CD4-positive, alpha-beta T cell (primary cell): ENCODE measurements at regions of chr22 and their contacts with region 1.

Region 1: DNA sequence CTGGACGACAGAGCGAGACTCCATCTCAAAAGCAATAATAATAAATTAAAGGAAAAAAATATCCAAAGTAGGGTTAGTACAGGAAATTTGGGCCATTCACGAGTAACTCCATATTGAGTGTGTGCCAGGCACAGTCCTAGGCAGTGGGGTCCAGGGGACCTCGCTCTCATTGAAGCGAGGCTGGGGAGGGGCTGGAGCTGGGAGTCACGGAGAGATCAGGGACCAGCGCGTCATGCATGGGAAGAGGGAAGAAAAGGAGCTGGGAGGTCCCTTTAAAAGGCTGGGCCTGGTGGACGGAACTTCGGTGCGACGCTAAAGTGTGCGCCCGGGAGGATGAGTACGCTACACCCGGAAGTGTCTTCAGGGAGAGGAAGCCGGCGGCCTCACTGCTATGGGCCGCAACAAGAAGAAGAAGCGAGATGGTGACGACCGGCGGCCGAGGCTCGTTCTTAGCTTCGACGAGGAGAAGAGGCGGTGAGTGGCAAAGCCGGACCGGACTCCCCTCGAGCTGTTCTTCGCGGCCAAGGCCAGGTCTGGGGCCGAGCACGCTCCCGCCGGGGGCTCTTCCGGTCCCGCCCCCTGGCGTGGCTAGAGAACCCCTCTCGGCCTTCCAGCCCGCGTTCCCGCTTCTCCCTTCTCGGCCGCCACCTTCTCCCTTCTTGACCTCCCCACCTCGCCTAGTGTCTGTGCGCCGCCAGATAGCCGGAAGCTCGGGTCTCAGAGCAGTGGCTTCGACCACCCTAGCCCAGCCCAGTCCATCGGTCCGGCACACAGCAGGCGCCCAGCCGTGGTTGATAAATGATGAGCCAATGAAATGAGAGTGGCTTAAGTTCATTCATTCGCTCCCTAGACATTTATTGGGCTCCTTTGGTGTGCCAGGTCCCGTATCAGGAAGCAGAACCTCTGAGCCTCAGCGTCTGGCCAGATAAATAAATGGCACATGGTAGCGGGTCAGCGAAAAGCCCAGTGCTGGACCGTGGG is at the start of gene NOL12:
- DNase-seq: peak; percentile 64 to 90 (median 72)
- ATAC-seq: peak; percentile 92
- H3K4me3 ChIP-seq: peak within 1 kb of the TSS; percentile 72
- H3K4me3 Mint-ChIP-seq: peak within 1 kb of the TSS; percentile 90
- H3K27ac ChIP-seq: peak within 1 kb of the TSS; percentile 75 to 80
- H3K27ac Mint-ChIP-seq: peak within 1 kb of the TSS; percentile 76
- H3K4me1 ChIP-seq: peaks cover 38% of the 10 kb centered on the region
- H3K4me1 Mint-ChIP-seq: peaks cover 27% of the 10 kb centered on the region
- H3K27me3 ChIP-seq: no peaks in the 10 kb centered on the region
- H3K27me3 Mint-ChIP-seq: no peaks in the 10 kb centered on the region
- CTCF ChIP-seq: no peak
- total RNA-seq, gene NOL12: 24.3 to 26.2 TPM

Region 2: GRCh38 chr22:37331034-37331428 is 355.3 kb before region 1 on chr22:
- CTCF ChIA-PET with region 1: no interaction called
- POLR2A ChIA-PET with region 1: no interaction called
- intact Hi-C with region 1: no loop called
- DNase-seq: no peak
- ATAC-seq: no peak
- H3K4me3 ChIP-seq: no peak overlapping the region
- H3K4me3 Mint-ChIP-seq: no peak overlapping the region
- H3K27ac ChIP-seq: no peak overlapping the region
- H3K27ac Mint-ChIP-seq: no peak overlapping the region
- H3K4me1 ChIP-seq: peaks cover 14% of the 10 kb centered on the region
- H3K4me1 Mint-ChIP-seq: peaks cover 11% of the 10 kb centered on the region
- H3K27me3 ChIP-seq: peaks cover 53 to 58% of the 10 kb centered on the region in 2 experiments
- H3K27me3 Mint-ChIP-seq: peaks cover 85% of the 10 kb centered on the region
- CTCF ChIP-seq: no peak

Region 3: GRCh38 chr22:37486224-37486845 is 200.0 kb before region 1 on chr22 and contains the start of gene MFNG:
- CTCF ChIA-PET with region 1: no interaction called
- POLR2A ChIA-PET with region 1: interaction called, 3 read pairs
- intact Hi-C with region 1: loop called in 1 of 2 experiments (anchors 10 kb)
- DNase-seq: peak; percentile 46 to 90 (median 72)
- ATAC-seq: peak; percentile 48
- H3K4me3 ChIP-seq: peak within 1 kb of the TSS; percentile 94
- H3K4me3 Mint-ChIP-seq: peak within 1 kb of the TSS; percentile 93
- H3K27ac ChIP-seq: peak within 1 kb of the TSS; percentile 87 to 88
- H3K27ac Mint-ChIP-seq: peak within 1 kb of the TSS; percentile 98
- H3K4me1 ChIP-seq: peaks cover 85% of the 10 kb centered on the region
- H3K4me1 Mint-ChIP-seq: peaks cover 77% of the 10 kb centered on the region
- H3K27me3 ChIP-seq: no peaks in the 10 kb centered on the region
- H3K27me3 Mint-ChIP-seq: no peaks in the 10 kb centered on the region
- CTCF ChIP-seq: no peak
- total RNA-seq, gene MFNG: 85.1 to 89.9 TPM

Region 4: DNA sequence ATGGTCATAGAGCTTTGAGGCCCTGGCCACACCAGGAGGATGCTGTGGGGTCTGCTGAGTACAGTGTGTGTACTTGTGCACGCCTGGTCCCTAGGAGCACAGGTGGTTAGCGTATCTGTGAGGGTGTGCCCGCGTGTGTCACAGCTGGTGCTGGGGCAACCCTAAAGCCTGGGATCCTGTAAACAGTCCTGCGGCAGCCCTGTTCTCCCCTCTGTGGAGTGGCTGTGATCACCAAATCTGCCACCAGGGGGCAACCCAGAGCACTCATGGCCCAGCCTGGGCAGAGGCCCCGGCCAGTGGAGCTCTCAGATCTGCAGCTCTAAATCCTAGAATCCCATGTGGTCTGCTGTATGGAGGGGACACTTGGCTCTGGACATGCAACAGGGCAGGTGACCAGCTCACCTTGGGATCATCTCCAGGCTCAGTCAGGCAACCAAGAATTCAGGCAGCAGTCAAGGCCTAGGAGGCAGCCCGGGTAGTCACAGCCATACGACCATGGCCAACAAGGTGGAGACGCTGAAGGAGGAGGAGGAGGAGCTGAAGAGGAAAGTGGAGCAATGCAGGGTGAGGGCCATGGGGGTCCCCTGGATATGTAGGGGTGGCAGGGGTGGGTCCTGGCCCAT is 43.0 kb before region 1 on chr22:
- CTCF ChIA-PET with region 1: interaction called, 171 read pairs
- POLR2A ChIA-PET with region 1: interaction called, 17 read pairs
- intact Hi-C with region 1: loop called (anchors 1 kb)
- DNase-seq: peak; percentile 73 to 94 (median 87)
- ATAC-seq: peak; percentile 68
- H3K4me3 ChIP-seq: no peak overlapping the region
- H3K4me3 Mint-ChIP-seq: peak overlapping the region; percentile 85
- H3K27ac ChIP-seq: no peak overlapping the region
- H3K27ac Mint-ChIP-seq: peak overlapping the region; percentile 80
- H3K4me1 ChIP-seq: peaks cover 65% of the 10 kb centered on the region
- H3K4me1 Mint-ChIP-seq: peaks cover 35% of the 10 kb centered on the region
- H3K27me3 ChIP-seq: no peaks in the 10 kb centered on the region
- H3K27me3 Mint-ChIP-seq: no peaks in the 10 kb centered on the region
- CTCF ChIP-seq: peak; percentile 91

Region 5: DNA sequence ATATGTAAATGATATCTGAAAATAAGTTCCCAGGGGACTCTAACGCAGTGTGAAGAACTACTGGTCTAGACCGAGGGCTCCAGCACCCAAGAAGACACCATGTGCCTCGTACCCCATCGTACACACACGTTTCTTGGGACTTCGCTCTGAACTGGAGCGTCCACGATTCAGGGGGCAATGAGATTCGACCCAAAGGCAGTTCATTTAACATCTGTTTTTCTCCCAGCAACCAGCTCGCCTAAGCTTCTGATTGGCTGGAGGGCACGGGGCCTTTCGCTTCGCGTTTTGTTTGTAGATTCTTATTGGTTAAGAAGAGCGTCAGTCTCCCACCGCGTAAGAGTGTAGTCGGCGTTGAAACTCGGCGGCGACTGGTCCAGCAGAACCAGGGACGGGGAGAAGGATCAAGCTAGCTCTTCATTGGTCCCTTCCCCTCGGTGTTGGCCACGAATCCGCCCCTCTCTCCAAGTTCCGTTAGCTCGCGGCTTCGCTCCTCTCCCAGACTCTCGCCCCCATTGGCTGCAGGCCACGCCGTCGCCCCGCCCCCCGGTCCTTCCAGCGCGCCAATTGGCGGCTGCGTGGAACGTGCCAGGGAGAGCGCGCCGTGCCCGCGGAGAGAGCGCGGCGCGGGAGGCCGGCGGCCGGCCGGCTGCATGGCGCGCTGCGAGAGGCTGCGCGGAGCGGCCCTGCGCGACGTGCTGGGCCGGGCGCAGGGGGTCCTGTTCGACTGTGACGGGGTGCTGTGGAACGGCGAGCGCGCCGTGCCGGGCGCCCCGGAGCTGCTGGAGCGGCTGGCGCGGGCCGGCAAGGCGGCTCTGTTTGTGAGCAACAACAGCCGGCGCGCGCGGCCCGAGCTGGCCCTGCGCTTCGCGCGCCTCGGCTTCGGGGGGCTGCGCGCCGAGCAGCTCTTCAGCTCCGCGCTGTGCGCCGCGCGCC is 27.9 kb before region 1 on chr22 and contains the start of gene PDXP:
- CTCF ChIA-PET with region 1: interaction called, 63 read pairs
- POLR2A ChIA-PET with region 1: interaction called, 25 read pairs
- intact Hi-C with region 1: loop called (anchors 1 kb)
- DNase-seq: peak; percentile 96 to 99 (median 99)
- ATAC-seq: peak; percentile 94
- H3K4me3 ChIP-seq: peak within 1 kb of the TSS; percentile 65
- H3K4me3 Mint-ChIP-seq: peak within 1 kb of the TSS; percentile 91
- H3K27ac ChIP-seq: peak within 1 kb of the TSS; percentile 48 to 78
- H3K27ac Mint-ChIP-seq: peak within 1 kb of the TSS; percentile 91
- H3K4me1 ChIP-seq: peaks cover 35% of the 10 kb centered on the region
- H3K4me1 Mint-ChIP-seq: peaks cover 44% of the 10 kb centered on the region
- H3K27me3 ChIP-seq: no peaks in the 10 kb centered on the region
- H3K27me3 Mint-ChIP-seq: no peaks in the 10 kb centered on the region
- CTCF ChIP-seq: no peak
- total RNA-seq, gene PDXP: 1.5 TPM

Region 6: GRCh38 chr22:37708580-37709444 is 22.5 kb after region 1 on chr22:
- CTCF ChIA-PET with region 1: no interaction called
- POLR2A ChIA-PET with region 1: no interaction called
- intact Hi-C with region 1: no loop called
- DNase-seq: peak in 1 of 14 experiments; percentile 30
- ATAC-seq: no peak
- H3K4me3 ChIP-seq: no peak overlapping the region
- H3K4me3 Mint-ChIP-seq: no peak overlapping the region
- H3K27ac ChIP-seq: no peak overlapping the region
- H3K27ac Mint-ChIP-seq: no peak overlapping the region
- H3K4me1 ChIP-seq: no peaks in the 10 kb centered on the region
- H3K4me1 Mint-ChIP-seq: no peaks in the 10 kb centered on the region
- H3K27me3 ChIP-seq: no peaks in the 10 kb centered on the region
- H3K27me3 Mint-ChIP-seq: no peaks in the 10 kb centered on the region
- CTCF ChIP-seq: no peak

Region 7: DNA sequence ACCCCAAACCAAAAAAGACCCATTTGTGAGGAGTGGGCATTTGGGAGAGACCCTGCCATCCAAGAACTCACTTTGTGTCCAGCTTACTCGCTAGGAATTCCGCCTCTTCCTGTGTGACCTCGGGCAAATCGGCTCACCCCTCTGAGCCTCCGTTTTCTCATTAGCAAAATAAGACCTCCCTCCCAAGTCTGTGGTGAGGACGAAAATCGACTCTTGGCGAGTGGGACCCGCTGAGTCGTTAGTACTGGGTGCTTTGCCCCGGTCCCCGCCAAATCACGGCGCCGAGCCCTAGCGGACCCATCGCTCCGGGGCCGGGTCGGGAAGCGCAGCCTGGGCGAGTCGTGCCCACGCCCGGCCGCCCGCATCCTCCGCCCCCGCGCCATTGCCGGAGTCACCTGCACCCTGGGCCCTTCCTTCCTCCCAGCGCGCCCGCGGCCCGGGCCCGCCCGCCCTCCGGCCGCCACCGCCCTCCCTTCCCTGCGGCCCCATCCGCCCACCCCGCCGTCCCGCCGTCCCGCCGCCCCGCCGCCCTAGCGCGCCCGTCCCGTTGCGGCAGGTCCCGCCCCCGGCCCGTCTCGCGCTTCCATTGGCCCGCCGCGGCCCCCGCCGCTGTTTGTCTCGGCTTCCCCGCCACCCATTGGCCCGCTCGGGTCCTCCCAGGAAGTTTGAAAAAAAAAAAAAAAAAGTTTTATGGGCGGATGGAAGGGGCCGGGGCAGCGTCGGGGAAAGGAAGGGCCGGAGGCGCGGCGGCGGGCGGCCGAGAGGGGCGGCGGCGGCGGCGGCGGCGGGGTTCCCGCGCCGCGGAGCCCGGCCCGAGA is 59.5 kb after region 1 on chr22:
- CTCF ChIA-PET with region 1: no interaction called
- POLR2A ChIA-PET with region 1: interaction called, 3 read pairs
- intact Hi-C with region 1: loop called in 1 of 2 experiments (anchors 2 kb)
- DNase-seq: peak; percentile 68 to 92 (median 84)
- ATAC-seq: peak; percentile 95
- H3K4me3 ChIP-seq: peak overlapping the region; percentile 90
- H3K4me3 Mint-ChIP-seq: peak overlapping the region; percentile 96
- H3K27ac ChIP-seq: peak overlapping the region in 1 of 2 donors; percentile 13
- H3K27ac Mint-ChIP-seq: peak overlapping the region; percentile 83
- H3K4me1 ChIP-seq: peaks cover 27% of the 10 kb centered on the region
- H3K4me1 Mint-ChIP-seq: peaks cover 22% of the 10 kb centered on the region
- H3K27me3 ChIP-seq: no peaks in the 10 kb centered on the region
- H3K27me3 Mint-ChIP-seq: no peaks in the 10 kb centered on the region
- CTCF ChIP-seq: no peak